IMR-90 (cell line): ENCODE measurements at regions of chr7 and their contacts with region 1.

Region 1: GRCh38 chr7:80189638-80190037 is 55.0 kb downstream of the GNAI1 start:
- DNase-seq: no peak
- ATAC-seq: no peak
- H3K4me3 ChIP-seq: no peak overlapping the region
- H3K27ac ChIP-seq: no peak overlapping the region
- H3K4me1 ChIP-seq: peaks cover 9% of the 10 kb centered on the region
- H3K27me3 ChIP-seq: no peaks in the 10 kb centered on the region
- CTCF ChIP-seq: no peak
- POLR2A ChIP-seq: no peak
- RAD21 ChIP-seq: no peak

Region 2: GRCh38 chr7:80206763-80207162 is 17.1 kb after region 1 on chr7:
- CTCF ChIA-PET with region 1: interaction called, 3 read pairs
- POLR2A ChIA-PET with region 1: no interaction called
- dilution Hi-C with region 1: no loop called
- in situ Hi-C with region 1: no loop called
- intact Hi-C with region 1: loop called (anchors 2 kb)
- DNase-seq: no peak
- ATAC-seq: no peak
- H3K4me3 ChIP-seq: no peak overlapping the region
- H3K27ac ChIP-seq: no peak overlapping the region
- H3K4me1 ChIP-seq: 0 out of 2 replicates have a peak, but pooled peaks cover 2% of the 10 kb centered on the region
- H3K27me3 ChIP-seq: no peaks in the 10 kb centered on the region
- CTCF ChIP-seq: no peak
- POLR2A ChIP-seq: no peak
- RAD21 ChIP-seq: no peak

Region 3: DNA sequence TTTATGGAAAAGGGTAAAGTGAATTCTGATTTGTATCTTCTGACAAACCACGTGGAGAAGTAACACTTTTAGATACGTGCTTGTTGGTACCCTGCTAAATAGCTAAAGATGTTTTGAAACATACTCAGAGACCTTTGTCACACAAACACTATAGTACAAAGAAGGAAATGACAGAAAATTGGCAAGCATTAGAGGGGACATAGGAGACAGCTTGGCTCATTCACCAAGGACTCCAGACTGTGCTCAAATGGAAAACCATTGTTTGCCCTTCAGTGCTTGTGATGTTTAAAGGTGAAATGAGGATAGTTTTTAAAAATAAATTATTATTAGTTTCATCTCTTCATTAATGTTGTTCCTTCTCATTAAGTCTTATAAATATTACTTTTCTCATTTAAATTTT is 414.8 kb after region 1 on chr7:
- CTCF ChIA-PET with region 1: no interaction called
- POLR2A ChIA-PET with region 1: no interaction called
- dilution Hi-C with region 1: no loop called
- in situ Hi-C with region 1: no loop called
- intact Hi-C with region 1: no loop called
- DNase-seq: no peak
- ATAC-seq: no peak
- H3K4me3 ChIP-seq: no peak overlapping the region
- H3K27ac ChIP-seq: no peak overlapping the region
- H3K4me1 ChIP-seq: peaks cover 9% of the 10 kb centered on the region
- H3K27me3 ChIP-seq: no peaks in the 10 kb centered on the region
- CTCF ChIP-seq: no peak
- POLR2A ChIP-seq: no peak
- RAD21 ChIP-seq: no peak

Region 4: GRCh38 chr7:80883188-80884025 is 693.8 kb after region 1 on chr7:
- CTCF ChIA-PET with region 1: no interaction called
- POLR2A ChIA-PET with region 1: no interaction called
- dilution Hi-C with region 1: no loop called
- in situ Hi-C with region 1: no loop called
- intact Hi-C with region 1: no loop called
- DNase-seq: peak; percentile 98
- ATAC-seq: peak; percentile 90
- H3K4me3 ChIP-seq: no peak overlapping the region
- H3K27ac ChIP-seq: no peak overlapping the region
- H3K4me1 ChIP-seq: peaks cover 8% of the 10 kb centered on the region
- H3K27me3 ChIP-seq: no peaks in the 10 kb centered on the region
- CTCF ChIP-seq: no peak
- POLR2A ChIP-seq: no peak
- RAD21 ChIP-seq: no peak